Thyroid gland (tissue), 4 donors: ENCODE measurements at regions of chr20 and their contacts with region 1.

Region 1: GRCh38 chr20:38229376-38230252 is 30.9 kb downstream of the KIAA1755 start:
- DNase-seq: no peak
- H3K4me3 ChIP-seq: no peak overlapping the region
- H3K27ac ChIP-seq: no peak overlapping the region
- H3K4me1 ChIP-seq: no peaks in the 10 kb centered on the region
- H3K27me3 ChIP-seq: no peaks in the 10 kb centered on the region
- CTCF ChIP-seq: peak in 2 of 6 experiments; percentile 36 to 38
- POLR2A ChIP-seq: no peak

Region 2: DNA sequence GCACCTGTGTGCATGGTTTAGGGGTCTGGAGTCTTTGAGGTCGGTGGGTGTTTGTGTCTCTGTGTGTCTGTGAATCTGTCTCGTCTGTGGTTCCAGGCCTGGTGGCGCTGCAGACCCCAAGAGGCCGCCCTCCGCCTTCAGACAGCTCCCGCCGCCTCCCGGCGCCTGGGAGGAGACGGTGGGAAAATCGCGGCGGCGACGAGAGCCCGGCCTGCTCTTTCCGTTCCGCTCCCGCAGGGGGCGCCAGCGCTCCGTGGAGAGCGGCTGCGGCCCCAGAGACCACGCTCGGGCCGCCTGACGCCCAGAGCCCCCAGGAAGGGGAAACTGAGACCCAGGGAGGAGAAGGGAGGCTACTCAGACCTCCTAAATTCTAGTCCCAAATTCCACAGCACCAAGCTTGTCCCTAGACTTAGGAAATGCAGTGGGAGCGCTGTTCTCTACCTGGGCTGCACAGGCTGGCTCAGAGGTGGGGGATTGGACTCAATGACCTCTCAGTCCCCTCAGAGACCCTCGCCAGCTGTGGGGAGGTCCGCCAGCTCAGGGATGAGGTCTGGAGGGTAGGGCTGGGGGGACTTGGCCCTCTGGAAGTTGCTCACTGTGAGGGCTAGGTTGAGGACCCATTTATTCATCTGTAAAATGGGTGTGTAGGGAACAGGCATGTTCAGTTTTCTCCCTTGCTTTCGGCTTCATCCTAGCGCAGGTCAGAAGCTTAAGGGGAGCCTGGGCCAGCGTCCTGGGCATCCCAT is 665.1 kb before region 1 on chr20:
- intact Hi-C with region 1: loop called (anchors 5 kb)
- DNase-seq: peak; percentile 20 to 36
- H3K4me3 ChIP-seq: no peak overlapping the region
- H3K27ac ChIP-seq: no peak overlapping the region
- H3K4me1 ChIP-seq: peaks cover 0 to 5% of the 10 kb centered on the region in 2 donors
- H3K27me3 ChIP-seq: peaks cover 4% of the 10 kb centered on the region
- CTCF ChIP-seq: peak; percentile 52 to 91 (median 63)
- POLR2A ChIP-seq: no peak